Spleen (tissue), 13 donors: ENCODE measurements at regions of chr17 and their contacts with region 1.

Region 1: DNA sequence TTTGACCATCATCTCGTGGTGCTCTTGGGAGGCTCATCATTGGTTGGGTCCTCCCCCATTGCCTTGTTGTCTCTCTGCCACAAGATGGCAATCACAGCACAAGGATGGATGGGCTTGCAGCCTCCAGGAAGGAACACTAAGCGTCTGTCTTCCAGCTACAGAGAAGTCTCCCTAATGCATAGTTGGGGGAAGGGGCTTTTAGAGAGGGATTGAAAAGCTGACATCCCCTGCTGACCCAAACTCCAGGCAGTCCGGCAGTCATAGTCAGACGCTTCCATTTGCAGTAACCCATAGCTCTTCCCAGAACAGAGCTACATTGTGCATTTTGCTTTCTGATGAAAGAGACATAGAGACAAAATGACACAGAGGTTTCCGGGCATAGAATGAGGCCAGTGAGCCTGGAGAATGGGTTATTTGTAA is 111.4 kb downstream of the UTP18 start:
- DNase-seq: no peak
- H3K4me3 ChIP-seq: no peak overlapping the region
- H3K27ac ChIP-seq: no peak overlapping the region
- H3K4me1 ChIP-seq: peaks cover 0 to 10% (median 0%) of the 10 kb centered on the region in 6 donors
- H3K27me3 ChIP-seq: peaks cover 0 to 5% (median 0%) of the 10 kb centered on the region in 7 donors
- CTCF ChIP-seq: peak in 9 of 11 experiments; percentile 16 to 62 (median 48)
- POLR2A ChIP-seq: no peak

Region 2: GRCh38 chr17:51275381-51275780 is 96.4 kb before region 1 on chr17:
- intact Hi-C with region 1: no loop called
- DNase-seq: no peak
- H3K4me3 ChIP-seq: no peak overlapping the region
- H3K27ac ChIP-seq: no peak overlapping the region
- H3K4me1 ChIP-seq: peaks cover 0 to 8% (median 3%) of the 10 kb centered on the region in 6 donors
- H3K27me3 ChIP-seq: no peaks in the 10 kb centered on the region
- CTCF ChIP-seq: no peak
- POLR2A ChIP-seq: no peak

Region 3: DNA sequence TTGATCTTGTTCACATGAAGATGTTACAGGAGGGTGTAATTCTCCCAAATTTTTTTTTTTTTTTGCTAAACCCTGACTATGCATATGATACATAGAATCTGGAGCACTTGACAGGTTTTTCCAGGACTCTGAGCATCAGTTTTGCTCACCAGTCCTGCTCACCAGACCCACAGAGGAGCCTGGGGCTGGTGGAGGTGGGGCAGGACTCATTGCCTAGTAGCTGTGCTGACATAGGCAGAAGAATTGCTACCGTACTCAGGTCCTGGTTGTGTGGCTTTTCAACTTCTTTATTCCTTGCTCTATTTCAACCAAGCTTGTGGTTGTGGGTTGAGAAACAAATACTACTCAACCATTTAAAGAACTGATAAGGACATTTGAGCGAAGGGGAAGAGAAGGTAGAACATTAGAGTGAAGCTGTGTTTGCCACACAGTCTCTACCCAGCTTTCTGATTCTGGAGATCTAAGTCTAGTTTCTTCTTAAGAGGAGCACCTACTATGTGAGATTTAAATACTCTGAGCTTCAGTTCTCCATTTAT is 101.0 kb after region 1 on chr17:
- intact Hi-C with region 1: no loop called
- DNase-seq: no peak
- H3K4me3 ChIP-seq: no peak overlapping the region
- H3K27ac ChIP-seq: no peak overlapping the region
- H3K4me1 ChIP-seq: no peaks in the 10 kb centered on the region
- H3K27me3 ChIP-seq: peaks cover 0 to 47% (median 0%) of the 10 kb centered on the region in 7 donors
- CTCF ChIP-seq: no peak
- POLR2A ChIP-seq: no peak

Region 4: GRCh38 chr17:51537996-51538550 is 166.3 kb after region 1 on chr17:
- intact Hi-C with region 1: loop called (anchors 10 kb)
- DNase-seq: no peak
- H3K4me3 ChIP-seq: no peak overlapping the region
- H3K27ac ChIP-seq: no peak overlapping the region
- H3K4me1 ChIP-seq: no peaks in the 10 kb centered on the region
- H3K27me3 ChIP-seq: peaks cover 0 to 18% (median 0%) of the 10 kb centered on the region in 7 donors
- CTCF ChIP-seq: no peak
- POLR2A ChIP-seq: no peak